GM12878 (cell line): ENCODE measurements at regions of chr17 and their contacts with region 1.

Region 1: GRCh38 chr17:48492401-48493298 is 38.2 kb downstream of the HOXB1 start:
- DNase-seq: no peak
- ATAC-seq: peak; percentile 98
- H3K4me3 ChIP-seq: peak overlapping the region; percentile 51; the same call in 1 of the 2 replicates
- H3K27ac ChIP-seq: no peak overlapping the region
- H3K4me1 ChIP-seq: peaks cover 20% of the 10 kb centered on the region
- H3K27me3 ChIP-seq: no peaks in the 10 kb centered on the region
- CTCF ChIP-seq: peak; percentile 84 to 94 (median 90)
- EP300 ChIP-seq: no peak
- POLR2A ChIP-seq: no peak
- RAD21 ChIP-seq: peak; percentile 79

Region 2: DNA sequence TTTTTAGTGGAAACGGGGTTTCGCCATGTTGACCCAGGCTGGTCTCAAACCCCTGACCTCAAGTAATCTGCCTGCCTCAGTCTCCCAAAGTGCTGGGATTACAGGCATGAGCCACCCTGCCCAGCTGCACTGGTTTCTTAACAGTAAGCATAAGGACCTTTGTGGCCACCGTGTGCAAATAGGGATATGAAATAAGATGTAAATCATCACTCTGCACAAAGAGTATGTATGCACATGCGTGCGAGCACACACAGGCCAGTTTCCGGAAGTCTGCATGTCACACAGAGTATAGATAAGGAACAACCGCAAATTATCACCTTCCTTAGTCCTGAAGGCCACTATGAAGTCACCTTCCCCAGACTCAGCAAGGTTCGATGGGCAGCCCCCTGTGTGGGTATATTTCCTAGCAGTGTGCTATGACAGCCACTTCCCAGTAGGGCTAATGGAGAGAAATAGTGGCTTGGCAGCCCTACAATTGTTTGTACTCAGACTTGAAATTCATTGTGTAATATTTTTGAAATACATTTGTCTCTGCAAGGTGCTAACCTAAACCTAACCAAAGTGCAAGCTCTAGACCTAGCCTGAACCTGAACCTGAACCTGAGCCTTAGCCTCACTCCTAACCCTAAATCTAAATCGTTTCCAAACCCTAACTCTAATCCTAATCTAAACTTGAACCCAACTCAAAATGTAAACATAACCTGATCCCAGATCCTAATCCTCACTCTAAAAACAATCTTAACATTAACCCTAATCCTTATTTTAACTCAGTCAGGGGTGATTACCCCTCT is 14.2 kb before region 1 on chr17:
- CTCF ChIA-PET with region 1: interaction called, 12 read pairs
- POLR2A ChIA-PET with region 1: no interaction called
- RAD21 ChIA-PET with region 1: interaction called, 3 read pairs
- SMC1A ChIA-PET with region 1: interaction called, 5 read pairs
- in situ Hi-C with region 1: no loop called
- intact Hi-C with region 1: no loop called
- DNase-seq: peak; percentile 84
- ATAC-seq: peak; percentile 98
- H3K4me3 ChIP-seq: no peak overlapping the region
- H3K27ac ChIP-seq: peak overlapping the region; percentile 51
- H3K4me1 ChIP-seq: peaks cover 20% of the 10 kb centered on the region
- H3K27me3 ChIP-seq: no peaks in the 10 kb centered on the region
- CTCF ChIP-seq: peak in 2 of 3 experiments; percentile 19 to 43; a peak in 1 of 6 replicates
- EP300 ChIP-seq: peak; percentile 88 to 91; a peak in 3 of 4 replicates
- POLR2A ChIP-seq: no peak
- RAD21 ChIP-seq: no peak

Region 3: DNA sequence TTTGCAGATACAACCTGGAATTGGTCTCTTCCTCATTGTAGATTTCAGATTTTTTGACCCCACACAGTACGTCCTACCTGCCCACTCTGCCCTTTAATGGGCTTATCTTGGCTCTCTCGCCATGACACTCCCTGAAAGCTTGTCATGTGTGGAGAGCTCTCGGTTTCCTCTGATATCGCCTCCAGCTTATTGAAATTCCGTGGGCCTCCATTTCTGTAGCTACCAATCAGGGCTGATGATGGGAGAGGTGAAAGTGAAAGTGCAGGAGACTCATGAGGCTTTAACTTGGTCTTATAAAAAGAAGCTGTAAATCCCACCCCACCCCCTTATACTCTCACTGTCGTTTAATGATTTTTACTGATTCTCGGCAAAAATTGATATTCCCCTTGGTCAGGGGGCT is 20.4 kb after region 1 on chr17:
- CTCF ChIA-PET with region 1: interaction called, 26 read pairs
- POLR2A ChIA-PET with region 1: interaction called, 7 read pairs
- RAD21 ChIA-PET with region 1: interaction called, 16 read pairs
- SMC1A ChIA-PET with region 1: interaction called, 8 read pairs
- in situ Hi-C with region 1: no loop called
- intact Hi-C with region 1: no loop called
- DNase-seq: no peak
- ATAC-seq: peak; percentile 53
- H3K4me3 ChIP-seq: peak overlapping the region; percentile 34; the same call in 1 of the 2 replicates
- H3K27ac ChIP-seq: peak overlapping the region; percentile 54
- H3K4me1 ChIP-seq: peaks cover 56% of the 10 kb centered on the region
- H3K27me3 ChIP-seq: no peaks in the 10 kb centered on the region
- CTCF ChIP-seq: no peak
- EP300 ChIP-seq: no peak
- POLR2A ChIP-seq: no peak
- RAD21 ChIP-seq: no peak

Region 4: GRCh38 chr17:48577946-48578615 is 85.4 kb after region 1 on chr17 and contains the start of gene HOXB4:
- CTCF ChIA-PET with region 1: interaction called, 10 read pairs
- POLR2A ChIA-PET with region 1: no interaction called
- RAD21 ChIA-PET with region 1: interaction called, 4 read pairs
- SMC1A ChIA-PET with region 1: interaction called, 6 read pairs
- in situ Hi-C with region 1: no loop called
- intact Hi-C with region 1: no loop called
- DNase-seq: peak; percentile 43
- ATAC-seq: peak; percentile 80
- H3K4me3 ChIP-seq: peak within 1 kb of the TSS; percentile 93
- H3K27ac ChIP-seq: peak within 1 kb of the TSS; percentile 57
- H3K4me1 ChIP-seq: peaks cover 23% of the 10 kb centered on the region
- H3K27me3 ChIP-seq: no peaks in the 10 kb centered on the region
- CTCF ChIP-seq: no peak
- EP300 ChIP-seq: no peak
- POLR2A ChIP-seq: peak; percentile 62
- RAD21 ChIP-seq: no peak
- polyA plus RNA-seq, gene HOXB4: 0.35 to 0.60 TPM

Region 5: DNA sequence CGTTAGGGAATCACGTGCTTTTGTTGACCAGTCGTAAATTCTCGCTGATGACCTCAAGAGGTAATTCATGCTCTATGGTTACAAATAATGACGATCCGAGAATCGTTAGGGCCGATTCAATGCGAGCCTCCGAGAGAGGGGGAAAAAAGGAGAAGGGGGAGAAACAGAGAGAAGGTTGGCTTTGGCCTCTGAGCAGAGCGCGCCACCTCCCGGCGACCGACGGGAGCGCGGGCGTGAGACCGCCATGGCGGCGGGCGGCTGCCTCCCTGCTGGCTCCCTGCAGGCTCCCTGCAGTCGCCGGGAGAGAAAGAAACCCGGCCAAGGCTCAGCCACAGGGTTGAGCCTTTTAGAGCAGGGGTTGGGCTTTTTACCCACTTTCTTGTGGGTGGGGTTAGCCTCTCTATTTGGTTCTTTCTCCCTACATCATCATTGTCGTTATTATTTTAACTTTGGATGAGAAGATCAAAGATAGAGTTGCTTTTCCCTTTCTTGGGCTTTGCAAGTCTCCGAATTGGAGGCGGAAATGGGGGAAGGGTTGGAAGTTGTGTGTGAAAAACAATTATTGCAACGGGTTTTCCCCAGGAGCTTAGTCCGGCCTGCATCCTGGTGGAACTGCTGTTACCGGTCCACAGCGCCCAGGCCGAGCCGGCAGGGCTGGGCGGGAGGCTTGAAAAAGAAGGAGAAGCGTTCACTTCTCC is 101.3 kb after region 1 on chr17:
- CTCF ChIA-PET with region 1: interaction called, 17 read pairs
- POLR2A ChIA-PET with region 1: no interaction called
- RAD21 ChIA-PET with region 1: interaction called, 21 read pairs
- SMC1A ChIA-PET with region 1: interaction called, 23 read pairs
- in situ Hi-C with region 1: no loop called
- intact Hi-C with region 1: no loop called
- DNase-seq: no peak
- ATAC-seq: peak; percentile 75
- H3K4me3 ChIP-seq: no peak overlapping the region; the same call in 1 of the 2 replicates
- H3K27ac ChIP-seq: no peak overlapping the region
- H3K4me1 ChIP-seq: peaks cover 10% of the 10 kb centered on the region
- H3K27me3 ChIP-seq: peaks cover 5 to 33% of the 10 kb centered on the region in 2 experiments
- CTCF ChIP-seq: peak; percentile 91 to 97 (median 94)
- EP300 ChIP-seq: no peak
- POLR2A ChIP-seq: no peak
- RAD21 ChIP-seq: peak; percentile 80